ENCODE measurements at regions of chr15 and their contacts with region 1.

Region 1: GRCh38 chr15:88620995-88621772 is at the start of gene AEN:
- DNase-seq: peak; percentile 96
- ATAC-seq: peak; percentile 99
- total RNA-seq, gene AEN: 10.7 TPM

Region 2: GRCh38 chr15:88834211-88834812 is 213.1 kb after region 1 on chr15:
- intact Hi-C with region 1: loop called (anchors 10 kb)
- DNase-seq: peak; percentile 86
- ATAC-seq: peak; percentile 94

Region 3: DNA sequence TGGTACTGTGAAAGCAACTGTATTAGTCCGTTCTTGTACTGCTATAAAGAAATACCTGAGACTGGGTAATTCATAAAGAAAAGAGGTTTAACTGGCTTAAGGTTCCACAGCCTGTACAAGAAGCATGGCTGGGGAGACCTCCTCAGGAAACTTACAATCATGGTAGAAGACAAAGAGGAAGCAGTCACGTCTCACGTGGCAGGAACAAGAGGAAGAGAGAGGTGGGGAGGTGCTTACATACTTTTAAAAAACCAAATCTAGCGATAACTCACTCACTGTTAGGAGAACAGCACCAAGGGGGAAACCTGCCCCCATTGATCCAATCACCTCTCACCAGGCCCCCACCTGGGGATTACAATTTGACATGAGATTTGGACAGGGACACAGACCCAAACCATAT is 1815.8 kb after region 1 on chr15:
- intact Hi-C with region 1: no loop called
- DNase-seq: no peak
- ATAC-seq: no peak